Mammary epithelial cell (primary cell): ENCODE measurements at regions of chr2 and their contacts with region 1.

Region 1: GRCh38 chr2:223712642-223713041 is 110.5 kb upstream of the SCG2 start:
- DNase-seq: no peak
- H3K4me3 ChIP-seq: no peak overlapping the region
- H3K27ac ChIP-seq: no peak overlapping the region
- H3K4me1 ChIP-seq: no peaks in the 10 kb centered on the region
- H3K27me3 ChIP-seq: no peaks in the 10 kb centered on the region
- CTCF ChIP-seq: no peak

Region 2: DNA sequence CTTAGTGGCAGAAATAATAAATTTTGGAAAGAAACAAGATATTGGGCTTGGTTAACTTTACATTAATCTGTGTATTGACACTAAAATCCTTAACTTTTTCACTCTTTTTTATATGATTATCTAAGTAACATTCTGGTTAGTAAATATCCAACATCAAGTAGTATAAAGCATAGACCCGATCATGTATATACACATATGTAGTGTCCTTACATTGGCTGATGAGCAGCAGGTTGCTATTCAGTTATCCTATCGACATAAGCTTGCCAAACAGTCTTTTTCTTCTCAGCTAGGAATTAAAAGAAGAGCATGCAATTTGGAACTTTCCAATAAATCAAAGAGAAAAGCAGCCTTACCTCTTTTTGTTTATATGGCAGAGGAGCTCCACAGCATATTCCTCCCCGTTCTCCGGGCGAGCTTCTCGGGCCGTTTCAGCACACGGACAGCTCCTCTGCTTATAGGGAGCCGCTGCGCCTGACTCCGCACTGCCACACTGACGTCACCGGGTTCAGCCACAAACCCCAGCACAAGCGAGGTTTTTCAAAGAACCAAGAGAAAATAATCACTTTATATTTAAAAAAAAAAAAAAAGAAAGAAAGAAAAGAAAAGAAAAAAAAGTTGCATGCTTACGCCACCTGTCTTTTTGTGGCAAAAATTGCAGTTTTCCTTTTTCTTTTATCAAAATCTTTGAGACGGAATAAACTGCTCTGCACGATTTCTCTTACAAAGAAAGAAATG is 110.5 kb before region 1 on chr2 and contains the start of gene SCG2:
- CTCF ChIA-PET with region 1: interaction called, 12 read pairs
- dilution Hi-C with region 1: no loop called
- in situ Hi-C with region 1: no loop called
- intact Hi-C with region 1: no loop called
- DNase-seq: peak; percentile 64
- H3K4me3 ChIP-seq: no peak within 1 kb of the TSS
- H3K27ac ChIP-seq: no peak within 1 kb of the TSS
- H3K4me1 ChIP-seq: peaks cover 12% of the 10 kb centered on the region
- H3K27me3 ChIP-seq: no peaks in the 10 kb centered on the region
- CTCF ChIP-seq: peak in 1 of 2 donors; percentile 25
- total RNA-seq, gene SCG2: not detected